PC-3 (cell line): ENCODE measurements at regions of chr2 and their contacts with region 1.

Region 1: GRCh38 chr2:165953655-165954606 is at the start of gene TTC21B:
- DNase-seq: peak; percentile 98
- ATAC-seq: peak; percentile 85
- H3K4me3 ChIP-seq: peak within 1 kb of the TSS; percentile 81
- H3K27ac ChIP-seq: peak within 1 kb of the TSS; percentile 85
- H3K4me1 ChIP-seq: peaks cover 24% of the 10 kb centered on the region
- H3K27me3 ChIP-seq: no peaks in the 10 kb centered on the region
- CTCF ChIP-seq: peak; percentile 97
- total RNA-seq, gene TTC21B: 21.7 and 35.5 TPM in 2 replicates

Region 2: GRCh38 chr2:165794536-165794928 is 159.4 kb before region 1 on chr2:
- CTCF ChIA-PET with region 1: no interaction called
- POLR2A ChIA-PET with region 1: interaction called, 7 read pairs
- intact Hi-C with region 1: loop called (anchors 2 kb)
- DNase-seq: peak; percentile 82
- ATAC-seq: peak; percentile 54
- H3K4me3 ChIP-seq: peak overlapping the region; percentile 81
- H3K27ac ChIP-seq: peak overlapping the region; percentile 80
- H3K4me1 ChIP-seq: peaks cover 42% of the 10 kb centered on the region
- H3K27me3 ChIP-seq: no peaks in the 10 kb centered on the region
- CTCF ChIP-seq: peak; percentile 24; the same call in 1 of the 2 replicates

Region 3: GRCh38 chr2:165889158-165889557 is 64.8 kb before region 1 on chr2:
- CTCF ChIA-PET with region 1: no interaction called
- POLR2A ChIA-PET with region 1: no interaction called
- intact Hi-C with region 1: no loop called
- DNase-seq: no peak
- ATAC-seq: no peak
- H3K4me3 ChIP-seq: no peak overlapping the region
- H3K27ac ChIP-seq: no peak overlapping the region
- H3K4me1 ChIP-seq: no peaks in the 10 kb centered on the region
- H3K27me3 ChIP-seq: no peaks in the 10 kb centered on the region
- CTCF ChIP-seq: no peak

Region 4: DNA sequence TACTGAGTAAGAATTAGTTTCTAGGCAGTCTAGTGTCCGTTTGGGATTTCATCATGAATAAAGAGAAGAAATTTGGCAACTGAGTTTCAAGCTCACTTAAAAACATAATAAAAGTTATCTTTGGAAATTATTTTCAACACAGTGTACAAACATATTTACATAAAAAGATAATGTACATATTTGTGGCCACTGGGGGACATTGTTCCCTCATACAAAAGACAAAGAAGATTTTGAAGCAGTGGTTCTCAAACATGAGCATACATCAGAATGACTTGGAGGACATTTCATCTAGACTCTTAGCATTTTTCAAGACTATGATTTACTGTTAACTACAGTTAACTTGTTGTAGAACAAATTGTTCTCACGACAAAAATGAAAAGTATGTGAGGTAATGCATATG is 15.3 kb after region 1 on chr2:
- CTCF ChIA-PET with region 1: interaction called, 3 read pairs
- POLR2A ChIA-PET with region 1: no interaction called
- intact Hi-C with region 1: loop called (anchors 1 kb)
- DNase-seq: no peak
- ATAC-seq: no peak
- H3K4me3 ChIP-seq: no peak overlapping the region
- H3K27ac ChIP-seq: no peak overlapping the region
- H3K4me1 ChIP-seq: no peaks in the 10 kb centered on the region
- H3K27me3 ChIP-seq: peaks cover 22% of the 10 kb centered on the region
- CTCF ChIP-seq: peak; percentile 33; the same call in 1 of the 2 replicates

Region 5: GRCh38 chr2:166234112-166234846 is 280.3 kb after region 1 on chr2:
- CTCF ChIA-PET with region 1: no interaction called
- POLR2A ChIA-PET with region 1: no interaction called
- intact Hi-C with region 1: loop called (anchors 5 kb)
- DNase-seq: peak; percentile 97
- ATAC-seq: peak; percentile 64
- H3K4me3 ChIP-seq: peak overlapping the region; percentile 14; the same call in 1 of the 2 replicates
- H3K27ac ChIP-seq: peak overlapping the region; percentile 80
- H3K4me1 ChIP-seq: peaks cover 71% of the 10 kb centered on the region
- H3K27me3 ChIP-seq: no peaks in the 10 kb centered on the region
- CTCF ChIP-seq: no peak

Region 6: DNA sequence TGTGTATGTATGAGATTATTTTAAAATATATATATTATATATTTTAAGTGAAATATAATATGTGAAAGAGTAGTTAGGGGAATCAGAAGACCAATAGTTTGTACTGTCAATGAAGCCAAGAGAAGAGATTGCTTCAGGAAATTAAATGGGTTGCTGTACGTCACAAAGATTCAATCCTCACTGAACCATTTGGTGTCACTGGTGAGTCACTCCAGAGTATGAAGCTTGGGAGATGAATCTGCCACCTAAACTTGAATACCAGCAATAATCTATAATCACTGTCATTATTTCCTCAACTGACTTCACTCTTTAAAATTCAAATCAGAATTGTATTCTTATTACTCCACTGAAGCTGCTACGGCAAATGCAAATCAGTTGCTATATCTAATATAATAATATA is 463.7 kb after region 1 on chr2:
- CTCF ChIA-PET with region 1: interaction called, 3 read pairs
- POLR2A ChIA-PET with region 1: no interaction called
- intact Hi-C with region 1: loop called (anchors 1 kb)
- DNase-seq: peak; percentile 72
- ATAC-seq: 0 out of 2 replicates have a peak, but pooled peaks have one; percentile 43
- H3K4me3 ChIP-seq: no peak overlapping the region
- H3K27ac ChIP-seq: no peak overlapping the region
- H3K4me1 ChIP-seq: no peaks in the 10 kb centered on the region
- H3K27me3 ChIP-seq: no peaks in the 10 kb centered on the region
- CTCF ChIP-seq: peak; percentile 44